ENCODE measurements at regions of chr20 and their contacts with region 1.

Region 1: GRCh38 chr20:50179507-50180016 is 11.1 kb upstream of the CEBPB start:
- DNase-seq: no peak
- ATAC-seq: peak; percentile 25
- H3K4me3 ChIP-seq: no peak overlapping the region
- H3K4me3 Mint-ChIP-seq: no peak overlapping the region
- H3K27ac ChIP-seq: no peak overlapping the region
- H3K27ac Mint-ChIP-seq: no peak overlapping the region
- H3K4me1 ChIP-seq: no peaks in the 10 kb centered on the region
- H3K4me1 Mint-ChIP-seq: no peaks in the 10 kb centered on the region
- H3K27me3 ChIP-seq: peaks cover 0 to under 1% (median 0%) of the 10 kb centered on the region in 4 experiments
- H3K27me3 Mint-ChIP-seq: peaks cover 9% of the 10 kb centered on the region
- CTCF ChIP-seq: peak; percentile 55

Region 2: DNA sequence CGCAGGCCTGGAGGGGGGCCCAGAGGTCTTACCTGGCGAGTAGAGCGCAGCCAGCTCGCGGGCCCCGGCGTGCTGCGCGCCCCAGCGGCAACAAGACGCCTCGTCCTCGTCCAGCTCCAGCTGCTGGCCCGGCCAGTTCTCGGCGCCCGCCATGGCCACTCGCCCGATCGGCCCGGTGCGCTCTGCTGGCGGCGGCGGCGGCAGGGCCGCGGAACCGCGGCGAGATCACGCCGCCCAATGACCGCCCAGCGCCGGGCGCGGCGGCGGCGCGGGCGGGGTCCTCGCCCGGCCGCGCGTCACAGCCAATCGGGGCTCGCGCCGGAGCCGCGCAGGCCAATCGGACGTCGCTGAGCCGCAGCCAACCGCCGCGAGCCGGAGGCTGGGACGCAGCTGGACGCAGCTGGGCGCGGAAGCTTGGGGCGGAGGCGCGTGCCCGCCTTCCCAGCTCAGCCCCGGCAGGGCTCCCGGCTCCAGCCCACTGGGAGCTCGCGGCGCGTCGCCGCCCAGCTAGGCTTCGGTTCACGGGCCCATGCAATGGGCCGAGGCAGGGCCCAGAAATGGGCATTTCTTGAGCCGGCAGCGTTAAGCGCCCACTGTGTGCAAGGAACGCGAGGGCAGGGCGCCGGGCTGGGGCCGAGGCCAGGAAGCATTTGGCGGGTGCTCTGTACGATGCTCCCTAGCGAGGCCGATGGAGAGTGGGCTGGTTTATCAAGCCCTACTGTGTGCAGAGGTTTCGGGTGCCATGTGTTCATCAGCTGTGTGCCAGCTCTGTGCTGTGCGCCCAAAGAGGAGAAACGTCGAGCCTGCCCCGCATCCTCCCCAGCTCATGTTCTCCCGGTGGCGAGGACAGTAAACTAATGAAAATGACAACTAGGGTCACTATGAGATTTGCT is 25.8 kb before region 1 on chr20 and contains the start of gene PEDS1:
- CTCF ChIA-PET with region 1: interaction called, 18 read pairs
- POLR2A ChIA-PET with region 1: no interaction called
- intact Hi-C with region 1: no loop called
- DNase-seq: peak; percentile 89
- ATAC-seq: peak; percentile 98
- H3K4me3 ChIP-seq: peak within 1 kb of the TSS; percentile 71 to 96 (median 87)
- H3K4me3 Mint-ChIP-seq: peak within 1 kb of the TSS; percentile 77
- H3K27ac ChIP-seq: peak within 1 kb of the TSS; percentile 63 to 85
- H3K27ac Mint-ChIP-seq: peak within 1 kb of the TSS; percentile 86
- H3K4me1 ChIP-seq: peaks cover 18 to 24% of the 10 kb centered on the region in 2 donors
- H3K4me1 Mint-ChIP-seq: peaks cover 38% of the 10 kb centered on the region
- H3K27me3 ChIP-seq: no peaks in the 10 kb centered on the region
- H3K27me3 Mint-ChIP-seq: no peaks in the 10 kb centered on the region
- CTCF ChIP-seq: no peak
- total RNA-seq, gene PEDS1: 11.2 and 13.9 TPM in 2 replicates

Region 3: GRCh38 chr20:50229060-50229605 is 49.6 kb after region 1 on chr20:
- CTCF ChIA-PET with region 1: no interaction called
- POLR2A ChIA-PET with region 1: no interaction called
- intact Hi-C with region 1: no loop called
- DNase-seq: no peak
- ATAC-seq: no peak
- H3K4me3 ChIP-seq: no peak overlapping the region
- H3K4me3 Mint-ChIP-seq: no peak overlapping the region
- H3K27ac ChIP-seq: no peak overlapping the region
- H3K27ac Mint-ChIP-seq: no peak overlapping the region
- H3K4me1 ChIP-seq: no peaks in the 10 kb centered on the region
- H3K4me1 Mint-ChIP-seq: no peaks in the 10 kb centered on the region
- H3K27me3 ChIP-seq: peaks cover 0 to 2% (median 0%) of the 10 kb centered on the region in 4 experiments
- H3K27me3 Mint-ChIP-seq: peaks cover 17% of the 10 kb centered on the region
- CTCF ChIP-seq: no peak

Region 4: GRCh38 chr20:50242853-50243609 is 63.5 kb after region 1 on chr20:
- CTCF ChIA-PET with region 1: no interaction called
- POLR2A ChIA-PET with region 1: no interaction called
- intact Hi-C with region 1: no loop called
- DNase-seq: no peak
- ATAC-seq: no peak
- H3K4me3 ChIP-seq: no peak overlapping the region
- H3K4me3 Mint-ChIP-seq: no peak overlapping the region
- H3K27ac ChIP-seq: no peak overlapping the region
- H3K27ac Mint-ChIP-seq: no peak overlapping the region
- H3K4me1 ChIP-seq: no peaks in the 10 kb centered on the region
- H3K4me1 Mint-ChIP-seq: no peaks in the 10 kb centered on the region
- H3K27me3 ChIP-seq: peaks cover 0 to 2% (median 0%) of the 10 kb centered on the region in 4 experiments
- H3K27me3 Mint-ChIP-seq: peaks cover 28% of the 10 kb centered on the region
- CTCF ChIP-seq: no peak

Region 5: GRCh38 chr20:50286609-50287008 is 107.0 kb after region 1 on chr20:
- CTCF ChIA-PET with region 1: no interaction called
- POLR2A ChIA-PET with region 1: no interaction called
- intact Hi-C with region 1: no loop called
- DNase-seq: peak; percentile 16
- ATAC-seq: no peak
- H3K4me3 ChIP-seq: peak overlapping the region in 2 of 5 experiments; percentile 20 to 28
- H3K4me3 Mint-ChIP-seq: peak overlapping the region; percentile 69
- H3K27ac ChIP-seq: no peak overlapping the region
- H3K27ac Mint-ChIP-seq: no peak overlapping the region
- H3K4me1 ChIP-seq: peaks cover 18 to 23% of the 10 kb centered on the region in 2 donors
- H3K4me1 Mint-ChIP-seq: peaks cover 20% of the 10 kb centered on the region
- H3K27me3 ChIP-seq: peaks cover 0 to 9% (median 2%) of the 10 kb centered on the region in 4 experiments
- H3K27me3 Mint-ChIP-seq: peaks cover 27% of the 10 kb centered on the region
- CTCF ChIP-seq: no peak

Region 6: GRCh38 chr20:50690634-50691572 is 511.3 kb after region 1 on chr20 and contains the start of gene RIPOR3:
- CTCF ChIA-PET with region 1: no interaction called
- POLR2A ChIA-PET with region 1: no interaction called
- intact Hi-C with region 1: no loop called
- DNase-seq: no peak
- ATAC-seq: no peak
- H3K4me3 ChIP-seq: no peak within 1 kb of the TSS
- H3K4me3 Mint-ChIP-seq: peak within 1 kb of the TSS; percentile 37
- H3K27ac ChIP-seq: no peak within 1 kb of the TSS
- H3K27ac Mint-ChIP-seq: no peak within 1 kb of the TSS
- H3K4me1 ChIP-seq: peaks cover 12% of the 10 kb centered on the region in 2 donors
- H3K4me1 Mint-ChIP-seq: peaks cover 11% of the 10 kb centered on the region
- H3K27me3 ChIP-seq: peaks cover 0 to 50% (median 9%) of the 10 kb centered on the region in 4 experiments
- H3K27me3 Mint-ChIP-seq: peaks cover 51% of the 10 kb centered on the region
- CTCF ChIP-seq: no peak
- total RNA-seq, gene RIPOR3: 0.27 TPM in 1 of 2 replicates, not detected in the other